ENCODE measurements at regions of chr4 and their contacts with region 1.

Region 1: GRCh38 chr4:26459054-26459755 is 31.1 kb downstream of the CCKAR start:
- DNase-seq: no peak
- ATAC-seq: peak; percentile 73
- H3K4me3 ChIP-seq: no peak overlapping the region
- H3K27ac ChIP-seq: no peak overlapping the region
- H3K4me1 ChIP-seq: no peaks in the 10 kb centered on the region
- H3K27me3 ChIP-seq: no peaks in the 10 kb centered on the region
- CTCF ChIP-seq: peak; percentile 64

Region 2: GRCh38 chr4:26622913-26623312 is 163.7 kb after region 1 on chr4:
- intact Hi-C with region 1: no loop called
- DNase-seq: no peak
- ATAC-seq: no peak
- H3K4me3 ChIP-seq: no peak overlapping the region
- H3K27ac ChIP-seq: no peak overlapping the region
- H3K4me1 ChIP-seq: no peaks in the 10 kb centered on the region
- H3K27me3 ChIP-seq: no peaks in the 10 kb centered on the region
- CTCF ChIP-seq: no peak

Region 3: DNA sequence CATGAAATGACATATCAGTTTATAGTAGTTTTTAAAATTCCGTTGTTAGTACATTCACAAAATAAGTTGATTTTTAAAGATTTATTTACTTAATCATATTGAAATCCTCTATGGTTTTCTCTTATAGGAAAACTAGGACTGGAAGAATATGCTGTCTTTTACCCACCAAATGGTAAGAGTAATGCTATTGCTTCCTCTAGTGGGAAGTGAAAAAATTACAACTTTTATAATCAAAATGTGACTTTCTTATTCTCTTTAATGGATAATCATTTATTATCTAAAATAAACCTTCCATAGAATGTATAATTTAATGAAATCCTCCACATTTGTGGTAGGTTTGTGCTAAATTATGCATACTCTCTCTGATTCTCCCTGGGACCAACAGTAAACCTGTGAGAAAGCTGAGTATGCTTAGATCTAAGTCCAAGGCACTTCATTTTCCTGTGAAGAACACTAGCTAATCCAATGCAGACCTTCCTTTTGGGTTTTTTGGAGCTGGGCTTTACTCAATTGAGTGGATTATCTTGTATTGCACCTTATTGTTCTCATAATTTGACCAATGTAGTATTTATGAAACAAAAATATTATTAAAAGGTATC is 260.8 kb after region 1 on chr4:
- intact Hi-C with region 1: loop called (anchors 10 kb)
- DNase-seq: no peak
- ATAC-seq: no peak
- H3K4me3 ChIP-seq: no peak overlapping the region
- H3K27ac ChIP-seq: no peak overlapping the region
- H3K4me1 ChIP-seq: no peaks in the 10 kb centered on the region
- H3K27me3 ChIP-seq: no peaks in the 10 kb centered on the region
- CTCF ChIP-seq: peak; percentile 66

Region 4: GRCh38 chr4:27010334-27010940 is 551.2 kb after region 1 on chr4:
- intact Hi-C with region 1: loop called (anchors 10 kb)
- DNase-seq: peak; percentile 67
- ATAC-seq: peak; percentile 92
- H3K4me3 ChIP-seq: no peak overlapping the region
- H3K27ac ChIP-seq: no peak overlapping the region
- H3K4me1 ChIP-seq: peaks cover 30% of the 10 kb centered on the region
- H3K27me3 ChIP-seq: no peaks in the 10 kb centered on the region
- CTCF ChIP-seq: peak; percentile 94

Measured in upper lobe of right lung (tissue), 1 donor.